ENCODE measurements at regions of chr5 and their contacts with region 1.

Region 1: DNA sequence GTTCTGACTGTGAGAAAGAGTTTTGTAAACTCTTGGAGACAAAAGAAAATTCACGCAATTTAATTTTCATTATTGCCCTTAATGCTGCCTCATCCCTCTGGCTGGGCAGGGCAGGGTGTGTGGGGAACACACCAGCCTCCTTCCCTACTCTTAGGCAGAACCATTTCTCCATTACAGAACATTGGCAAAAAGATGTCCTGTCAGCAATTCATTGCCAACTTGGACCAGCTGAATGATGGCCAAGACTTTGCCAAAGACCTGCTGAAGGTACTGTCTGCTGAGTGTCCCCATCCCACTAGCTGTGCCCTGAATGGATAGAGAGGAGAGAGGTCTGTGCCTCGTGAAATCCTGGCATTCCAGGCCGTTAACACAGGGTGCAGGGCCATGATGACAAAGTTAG is 37.9 kb downstream of the PSD2 start:
- DNase-seq: no peak
- H3K4me3 Mint-ChIP-seq: no peak overlapping the region
- H3K27ac Mint-ChIP-seq: no peak overlapping the region
- H3K4me1 Mint-ChIP-seq: no peaks in the 10 kb centered on the region
- H3K27me3 Mint-ChIP-seq: peaks cover 98% of the 10 kb centered on the region
- CTCF ChIP-seq: no peak

Region 2: DNA sequence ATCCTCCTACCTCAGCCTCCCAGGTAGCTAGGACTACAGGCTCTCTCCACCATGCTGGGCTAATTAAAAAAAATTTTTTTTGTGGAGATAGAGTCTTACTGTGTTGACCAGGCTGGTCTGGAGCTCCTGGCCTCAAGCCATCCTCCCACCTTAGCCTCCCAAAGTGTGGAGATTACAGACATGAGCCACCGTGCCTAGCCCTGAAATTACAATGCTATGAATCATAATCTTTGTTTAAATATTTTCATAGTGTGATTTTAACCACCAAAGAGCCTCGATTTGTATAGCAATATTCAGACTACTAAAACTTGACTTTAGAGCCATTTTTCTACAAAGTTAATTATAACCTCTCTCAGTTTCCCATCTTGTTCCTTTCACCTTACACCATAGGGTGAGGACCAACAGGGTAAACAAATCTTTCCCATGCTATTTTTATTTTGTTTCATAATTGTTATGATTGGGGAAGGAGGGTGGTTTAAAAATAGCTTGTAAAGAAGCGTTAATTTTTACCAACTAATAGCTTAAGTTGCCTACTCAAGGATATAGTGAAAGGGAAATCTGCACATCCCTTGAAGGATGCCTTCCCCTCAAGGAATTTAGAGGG is 239.7 kb before region 1 on chr5:
- CTCF ChIA-PET with region 1: interaction called, 13 read pairs
- intact Hi-C with region 1: no loop called
- DNase-seq: peak; percentile 67
- H3K4me3 Mint-ChIP-seq: peak overlapping the region; percentile 32
- H3K27ac Mint-ChIP-seq: peak overlapping the region; percentile 83
- H3K4me1 Mint-ChIP-seq: peaks cover 30% of the 10 kb centered on the region
- H3K27me3 Mint-ChIP-seq: no peaks in the 10 kb centered on the region
- CTCF ChIP-seq: no peak

Region 3: DNA sequence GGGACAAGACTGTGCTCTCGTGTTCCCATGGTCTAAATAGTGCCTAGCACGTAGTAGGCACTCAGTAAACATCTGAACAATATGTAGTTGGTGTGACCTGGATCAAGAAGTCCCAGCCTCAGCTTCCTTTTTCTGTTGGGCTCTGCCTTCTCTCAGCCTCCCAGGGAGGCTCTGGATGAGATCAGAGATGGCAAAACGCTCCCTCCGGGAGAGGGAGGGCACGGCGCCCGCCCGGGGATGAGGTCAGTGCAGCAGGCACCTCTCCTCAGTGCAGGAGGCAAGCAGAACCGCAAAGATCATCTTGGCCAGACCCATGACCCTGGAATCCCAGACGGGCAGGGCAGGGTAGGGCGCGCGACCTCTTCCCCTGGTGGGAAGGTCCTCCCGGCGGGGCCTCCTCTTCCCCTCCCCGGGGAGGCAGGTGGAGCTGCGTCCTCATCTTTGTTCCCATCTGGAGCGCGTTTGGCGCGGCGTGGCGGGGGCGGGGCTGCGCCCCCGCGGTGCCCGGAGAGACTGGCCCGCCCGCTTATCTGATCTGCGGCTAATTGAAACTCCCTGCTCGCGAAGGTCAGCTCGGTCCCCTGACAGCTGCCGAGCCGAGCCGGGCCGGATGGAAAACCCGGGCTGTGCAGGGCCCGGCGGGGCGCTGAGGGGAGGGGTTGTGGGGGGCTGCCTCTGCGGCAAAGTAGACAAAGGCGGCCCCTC is 124.5 kb before region 1 on chr5:
- CTCF ChIA-PET with region 1: no interaction called
- intact Hi-C with region 1: no loop called
- DNase-seq: no peak
- H3K4me3 Mint-ChIP-seq: peak overlapping the region; percentile 57
- H3K27ac Mint-ChIP-seq: peak overlapping the region; percentile 17
- H3K4me1 Mint-ChIP-seq: peaks cover 16% of the 10 kb centered on the region
- H3K27me3 Mint-ChIP-seq: peaks cover 28% of the 10 kb centered on the region
- CTCF ChIP-seq: no peak

Region 4: DNA sequence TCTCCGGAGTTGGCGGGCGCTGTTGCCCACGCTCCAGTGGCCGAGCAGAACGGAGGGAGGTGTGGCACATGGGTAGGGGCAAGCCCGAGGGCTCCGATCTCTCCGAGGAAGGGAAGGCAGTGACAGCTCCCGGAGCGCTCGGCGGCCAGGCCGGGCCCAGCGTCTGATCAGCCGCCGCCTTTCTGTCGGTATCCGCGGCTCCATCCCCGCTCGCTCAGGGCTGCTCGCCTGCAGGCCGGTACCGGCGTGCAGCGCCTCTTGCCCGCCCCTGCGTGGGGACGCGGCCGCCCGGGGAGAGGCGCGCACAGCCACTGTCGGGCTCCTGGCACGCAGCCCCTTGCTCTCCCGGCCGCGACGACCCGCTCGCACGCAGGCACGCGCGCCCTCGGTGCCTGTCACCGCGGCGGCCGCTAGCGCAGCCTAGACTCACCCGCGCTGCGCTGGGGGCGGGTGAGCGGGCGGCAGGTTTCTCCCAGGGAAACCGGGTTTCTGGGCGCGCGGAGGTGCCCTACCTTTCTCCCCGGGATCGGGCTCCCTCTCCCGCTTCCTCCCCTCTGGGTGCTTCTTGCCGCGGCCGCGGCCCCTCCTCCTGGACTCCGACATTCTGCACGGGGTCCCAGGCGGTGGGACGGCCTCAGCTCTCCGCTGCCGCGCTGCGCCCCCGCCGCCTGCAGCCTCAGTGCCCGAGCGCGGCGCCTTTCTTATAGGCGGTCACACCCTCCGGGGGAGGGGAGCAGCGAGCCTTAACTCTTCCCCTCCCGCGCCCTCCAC is 70.5 kb after region 1 on chr5:
- CTCF ChIA-PET with region 1: no interaction called
- intact Hi-C with region 1: no loop called
- DNase-seq: peak; percentile 18
- H3K4me3 Mint-ChIP-seq: no peak overlapping the region
- H3K27ac Mint-ChIP-seq: no peak overlapping the region
- H3K4me1 Mint-ChIP-seq: no peaks in the 10 kb centered on the region
- H3K27me3 Mint-ChIP-seq: peaks cover 48% of the 10 kb centered on the region
- CTCF ChIP-seq: no peak